Heart right ventricle (tissue), 16 donors: ENCODE measurements at regions of chr6 and their contacts with region 1.

Region 1: DNA sequence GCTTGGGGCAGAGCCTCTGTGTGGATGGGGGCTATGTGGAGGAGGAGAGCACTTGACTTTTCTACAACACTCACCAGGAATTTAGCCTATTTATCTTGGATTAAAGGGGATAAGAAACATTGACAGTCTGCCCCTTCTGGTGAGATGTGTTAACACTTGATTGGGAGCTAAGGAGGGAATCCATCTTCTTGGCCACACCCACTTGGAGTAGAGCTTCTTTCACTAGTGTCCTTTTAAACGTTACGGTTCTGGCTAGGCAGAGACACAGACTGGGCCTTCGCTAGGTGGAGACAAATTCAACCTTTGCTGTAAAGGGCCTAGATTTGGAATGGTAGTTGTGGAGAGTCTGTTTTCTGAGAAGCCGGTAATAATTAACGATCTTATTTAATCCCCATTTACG is 15.5 kb upstream of the TPBG start:
- DNase-seq: no peak
- ATAC-seq: no peak
- H3K4me3 ChIP-seq: no peak overlapping the region
- H3K27ac ChIP-seq: no peak overlapping the region
- H3K4me1 ChIP-seq: no peaks in the 10 kb centered on the region
- H3K27me3 ChIP-seq: peaks cover 0 to 13% (median 0%) of the 10 kb centered on the region in 7 donors
- CTCF ChIP-seq: no peak

Region 2: DNA sequence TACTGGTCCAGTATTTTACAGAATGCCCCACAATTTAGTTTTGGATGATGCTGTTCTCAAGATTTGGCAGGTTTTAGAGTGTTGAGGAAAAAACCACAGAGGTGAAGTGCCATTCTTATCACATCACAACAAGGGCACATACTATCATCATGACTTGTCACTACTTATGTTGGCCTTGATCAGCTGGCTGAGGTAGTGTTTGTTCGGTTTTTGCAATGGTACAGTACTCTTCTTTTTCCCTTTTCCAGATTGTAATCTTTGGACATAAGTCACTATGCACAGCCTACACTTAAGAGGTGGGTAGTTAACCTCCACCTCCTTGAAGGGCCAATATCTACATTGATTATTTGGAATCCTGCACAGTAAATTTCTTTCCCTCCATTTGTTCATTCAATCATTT is 604.5 kb before region 1 on chr6:
- intact Hi-C with region 1: no loop called
- DNase-seq: no peak
- ATAC-seq: peak in 4 of 8 donors; percentile 26 to 57 (median 50)
- H3K4me3 ChIP-seq: no peak overlapping the region
- H3K27ac ChIP-seq: peak overlapping the region in 5 of 10 donors; percentile 13 to 32 (median 20)
- H3K4me1 ChIP-seq: peaks cover 3 to 67% (median 36%) of the 10 kb centered on the region in 9 donors
- H3K27me3 ChIP-seq: no peaks in the 10 kb centered on the region
- CTCF ChIP-seq: no peak

Region 3: GRCh38 chr6:82040405-82041221 is 307.5 kb before region 1 on chr6:
- intact Hi-C with region 1: no loop called
- DNase-seq: peak in 1 of 2 donors; percentile 50
- ATAC-seq: peak in 7 of 8 donors; percentile 72 to 88 (median 80)
- H3K4me3 ChIP-seq: no peak overlapping the region
- H3K27ac ChIP-seq: peak overlapping the region in 4 of 10 donors; percentile 4 to 22 (median 18)
- H3K4me1 ChIP-seq: peaks cover 0 to 12% (median 5%) of the 10 kb centered on the region in 9 donors
- H3K27me3 ChIP-seq: no peaks in the 10 kb centered on the region
- CTCF ChIP-seq: peak; percentile 46 to 75 (median 71)

Region 4: GRCh38 chr6:82076916-82077315 is 271.2 kb before region 1 on chr6:
- intact Hi-C with region 1: no loop called
- DNase-seq: no peak
- ATAC-seq: peak in 1 of 8 donors; percentile 19
- H3K4me3 ChIP-seq: no peak overlapping the region
- H3K27ac ChIP-seq: no peak overlapping the region
- H3K4me1 ChIP-seq: peaks cover 0 to 33% (median 5%) of the 10 kb centered on the region in 9 donors
- H3K27me3 ChIP-seq: no peaks in the 10 kb centered on the region
- CTCF ChIP-seq: peak in 3 of 9 donors; percentile 11 to 20 (median 17)

Region 5: GRCh38 chr6:82646214-82646580 is 298.1 kb after region 1 on chr6:
- intact Hi-C with region 1: loop called in 1 of 10 experiments (anchors 10 kb)
- DNase-seq: no peak
- ATAC-seq: no peak
- H3K4me3 ChIP-seq: no peak overlapping the region
- H3K27ac ChIP-seq: peak overlapping the region in 4 of 10 donors; percentile 46 to 59 (median 54)
- H3K4me1 ChIP-seq: peaks cover 0 to 12% (median 0%) of the 10 kb centered on the region in 9 donors
- H3K27me3 ChIP-seq: no peaks in the 10 kb centered on the region
- CTCF ChIP-seq: no peak